Heart left ventricle (tissue), 16 donors: ENCODE measurements at regions of chr3 and their contacts with region 1.

Region 1: GRCh38 chr3:30353711-30354467 is 252.5 kb upstream of the TGFBR2 start:
- DNase-seq: no peak
- ATAC-seq: peak; percentile 67 to 84 (median 80)
- H3K4me3 ChIP-seq: no peak overlapping the region
- H3K27ac ChIP-seq: peak overlapping the region; percentile 62 to 91 (median 72)
- H3K4me1 ChIP-seq: peaks cover 4 to 62% (median 37%) of the 10 kb centered on the region in 12 donors
- H3K27me3 ChIP-seq: no peaks in the 10 kb centered on the region
- CTCF ChIP-seq: no peak
- POLR2A ChIP-seq: no peak

Region 2: DNA sequence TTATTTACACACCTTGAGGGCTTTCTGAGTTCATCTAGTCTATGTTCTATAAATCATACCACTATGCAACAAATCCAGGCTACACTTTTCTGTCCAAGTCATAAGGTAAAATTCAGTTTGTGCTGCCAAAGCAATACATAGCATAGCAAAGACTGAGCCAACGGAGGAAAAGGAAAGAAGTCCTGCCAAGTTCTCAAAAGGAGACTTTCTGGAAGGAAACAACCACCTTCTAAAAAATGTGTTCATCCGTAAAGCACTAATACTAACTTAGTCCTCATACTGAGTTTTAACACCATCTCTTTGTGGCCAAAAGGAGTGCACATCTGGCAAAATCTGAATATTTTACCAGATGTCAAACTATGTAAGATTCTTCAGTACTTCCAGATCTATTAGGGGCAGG is 452.8 kb before region 1 on chr3:
- intact Hi-C with region 1: no loop called
- DNase-seq: no peak
- ATAC-seq: peak in 2 of 4 donors; percentile 18 to 47
- H3K4me3 ChIP-seq: no peak overlapping the region
- H3K27ac ChIP-seq: peak overlapping the region in 1 of 12 donors; percentile 17
- H3K4me1 ChIP-seq: peaks cover 0 to 11% (median 0%) of the 10 kb centered on the region in 12 donors
- H3K27me3 ChIP-seq: no peaks in the 10 kb centered on the region
- CTCF ChIP-seq: no peak
- POLR2A ChIP-seq: no peak

Region 3: GRCh38 chr3:30401971-30402370 is 48.1 kb after region 1 on chr3:
- intact Hi-C with region 1: loop called in 2 of 10 experiments (anchors 5 kb)
- DNase-seq: peak in 2 of 5 donors; percentile 20 to 27
- ATAC-seq: peak in 3 of 4 donors; percentile 55 to 59 (median 59)
- H3K4me3 ChIP-seq: no peak overlapping the region
- H3K27ac ChIP-seq: peak overlapping the region in 4 of 12 donors; percentile 4 to 46 (median 21)
- H3K4me1 ChIP-seq: peaks cover 0 to 46% (median 22%) of the 10 kb centered on the region in 12 donors
- H3K27me3 ChIP-seq: no peaks in the 10 kb centered on the region
- CTCF ChIP-seq: no peak
- POLR2A ChIP-seq: no peak

Region 4: DNA sequence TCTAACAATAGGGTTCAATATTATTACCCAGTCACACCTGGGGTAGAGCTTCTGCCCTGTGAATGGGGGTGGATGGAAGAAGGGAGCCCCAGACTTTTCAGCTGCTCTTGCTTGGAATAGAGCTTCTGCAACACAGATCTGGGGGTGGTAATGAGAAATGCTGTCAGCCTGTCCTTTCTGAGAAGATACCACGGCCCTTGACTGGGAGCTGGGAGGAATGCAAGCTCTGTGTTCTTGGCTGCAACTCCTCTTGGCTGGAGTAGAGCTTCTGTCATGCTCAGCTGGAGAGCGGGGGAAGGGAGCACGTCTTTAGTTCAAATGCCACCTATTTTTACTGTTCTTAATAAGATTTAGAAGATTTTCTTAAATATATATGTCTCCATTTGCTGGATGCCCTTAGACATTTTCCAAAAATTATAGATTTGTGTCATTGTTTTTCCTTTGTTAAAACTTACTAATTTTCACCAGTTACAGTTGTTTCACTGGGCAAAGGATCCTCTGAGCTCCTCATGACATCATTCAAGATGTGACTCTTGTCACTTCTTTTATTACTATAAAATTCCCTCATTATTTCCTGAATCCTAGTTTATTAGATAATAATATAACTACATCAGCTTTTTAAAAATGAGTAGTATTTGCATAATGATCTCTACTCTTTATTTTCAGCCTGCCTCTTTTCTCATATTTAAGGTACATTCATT is 72.6 kb after region 1 on chr3:
- intact Hi-C with region 1: loop called in 1 of 10 experiments (anchors 10 kb)
- DNase-seq: peak; percentile 64 to 89 (median 81)
- ATAC-seq: peak; percentile 100
- H3K4me3 ChIP-seq: no peak overlapping the region
- H3K27ac ChIP-seq: peak overlapping the region; percentile 53 to 86 (median 68)
- H3K4me1 ChIP-seq: peaks cover 0 to 24% (median 12%) of the 10 kb centered on the region in 12 donors
- H3K27me3 ChIP-seq: no peaks in the 10 kb centered on the region
- CTCF ChIP-seq: no peak
- POLR2A ChIP-seq: no peak

Region 5: GRCh38 chr3:30437171-30437601 is 83.3 kb after region 1 on chr3:
- intact Hi-C with region 1: loop called in 2 of 10 experiments (anchors 5 kb)
- DNase-seq: peak in 4 of 5 donors; percentile 33 to 70 (median 52)
- ATAC-seq: peak in 3 of 4 donors; percentile 48 to 76 (median 74)
- H3K4me3 ChIP-seq: no peak overlapping the region
- H3K27ac ChIP-seq: peak overlapping the region; percentile 19 to 83 (median 55)
- H3K4me1 ChIP-seq: peaks cover 0 to 47% (median 27%) of the 10 kb centered on the region in 12 donors
- H3K27me3 ChIP-seq: no peaks in the 10 kb centered on the region
- CTCF ChIP-seq: peak in 3 of 12 donors; percentile 1 to 24 (median 14)
- POLR2A ChIP-seq: no peak

Region 6: GRCh38 chr3:30511524-30512278 is 157.8 kb after region 1 on chr3:
- intact Hi-C with region 1: loop called in 1 of 10 experiments (anchors 10 kb)
- DNase-seq: peak in 1 of 5 donors; percentile 34
- ATAC-seq: peak; percentile 49 to 91 (median 83)
- H3K4me3 ChIP-seq: no peak overlapping the region
- H3K27ac ChIP-seq: peak overlapping the region; percentile 6 to 71 (median 49)
- H3K4me1 ChIP-seq: peaks cover 0 to 12% (median 3%) of the 10 kb centered on the region in 12 donors
- H3K27me3 ChIP-seq: no peaks in the 10 kb centered on the region
- CTCF ChIP-seq: no peak
- POLR2A ChIP-seq: no peak

Region 7: GRCh38 chr3:30984855-30985749 is 631.2 kb after region 1 on chr3:
- intact Hi-C with region 1: no loop called
- DNase-seq: no peak
- ATAC-seq: no peak
- H3K4me3 ChIP-seq: peak overlapping the region in 1 of 12 donors; percentile 15
- H3K27ac ChIP-seq: no peak overlapping the region
- H3K4me1 ChIP-seq: peaks cover 0 to 7% (median 0%) of the 10 kb centered on the region in 12 donors
- H3K27me3 ChIP-seq: no peaks in the 10 kb centered on the region
- CTCF ChIP-seq: no peak
- POLR2A ChIP-seq: no peak